ENCODE measurements at regions of chr11 and their contacts with region 1.

Region 1: DNA sequence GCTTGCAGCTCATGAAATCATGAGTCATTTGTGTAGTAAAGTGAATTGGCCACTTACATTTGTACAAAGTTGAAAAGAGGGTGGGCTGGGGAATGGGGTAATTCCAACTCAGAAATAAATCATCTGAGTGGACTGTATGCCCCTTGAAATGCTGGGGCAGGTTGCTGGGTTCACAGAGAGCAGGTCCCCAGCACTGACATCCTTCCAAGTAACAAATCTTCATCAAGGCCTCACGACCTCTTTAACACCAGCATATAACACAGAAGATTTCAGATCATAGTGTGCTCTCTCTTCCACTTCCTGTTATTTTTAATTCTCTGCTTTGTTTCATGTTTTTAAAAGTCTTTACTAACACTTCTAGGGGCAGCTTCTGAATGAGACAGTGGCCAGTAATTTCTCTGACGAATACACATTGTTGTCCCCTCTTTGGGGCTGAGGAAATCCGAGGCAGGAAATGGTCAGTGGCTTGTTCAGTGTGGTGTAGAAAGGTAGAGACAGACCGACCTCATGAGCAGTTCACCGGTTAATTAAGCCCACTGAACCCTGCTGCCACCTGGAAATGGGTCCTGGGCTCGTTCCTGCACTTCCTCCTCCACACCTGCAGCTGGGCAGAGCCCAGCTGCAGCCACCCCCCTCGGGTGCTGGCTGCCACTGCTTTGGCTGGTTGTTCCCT is 127.7 kb downstream of the MAML2 start:
- DNase-seq: peak in 9 of 10 donors; percentile 15 to 67 (median 36)
- ATAC-seq: peak; percentile 75 to 77
- H3K4me3 Mint-ChIP-seq: peak overlapping the region; percentile 64 to 87 (median 75)
- H3K27ac Mint-ChIP-seq: peak overlapping the region; percentile 91 to 99 (median 96)
- H3K4me1 Mint-ChIP-seq: peaks cover 52 to 98% (median 84%) of the 10 kb centered on the region in 4 donors
- H3K27me3 Mint-ChIP-seq: no peaks in the 10 kb centered on the region

Region 2: GRCh38 chr11:96235751-96236150 is 20.5 kb after region 1 on chr11:
- POLR2A ChIA-PET with region 1: interaction called, 11 read pairs
- DNase-seq: no peak
- ATAC-seq: peak; percentile 29 to 33
- H3K4me3 Mint-ChIP-seq: peak overlapping the region in 6 of 10 donors; percentile 2 to 39 (median 13)
- H3K27ac Mint-ChIP-seq: peak overlapping the region in 7 of 10 donors; percentile 34 to 85 (median 69)
- H3K4me1 Mint-ChIP-seq: peaks cover 19 to 53% (median 38%) of the 10 kb centered on the region in 4 donors
- H3K27me3 Mint-ChIP-seq: no peaks in the 10 kb centered on the region

Region 3: GRCh38 chr11:96242971-96243647 is 27.9 kb after region 1 on chr11:
- POLR2A ChIA-PET with region 1: interaction called, 16 read pairs
- DNase-seq: peak; percentile 54 to 81 (median 66)
- ATAC-seq: peak; percentile 73 to 85
- H3K4me3 Mint-ChIP-seq: peak overlapping the region; percentile 81 to 91 (median 84)
- H3K27ac Mint-ChIP-seq: peak overlapping the region; percentile 80 to 100 (median 93)
- H3K4me1 Mint-ChIP-seq: peaks cover 34 to 65% (median 62%) of the 10 kb centered on the region in 4 donors
- H3K27me3 Mint-ChIP-seq: no peaks in the 10 kb centered on the region

Region 4: DNA sequence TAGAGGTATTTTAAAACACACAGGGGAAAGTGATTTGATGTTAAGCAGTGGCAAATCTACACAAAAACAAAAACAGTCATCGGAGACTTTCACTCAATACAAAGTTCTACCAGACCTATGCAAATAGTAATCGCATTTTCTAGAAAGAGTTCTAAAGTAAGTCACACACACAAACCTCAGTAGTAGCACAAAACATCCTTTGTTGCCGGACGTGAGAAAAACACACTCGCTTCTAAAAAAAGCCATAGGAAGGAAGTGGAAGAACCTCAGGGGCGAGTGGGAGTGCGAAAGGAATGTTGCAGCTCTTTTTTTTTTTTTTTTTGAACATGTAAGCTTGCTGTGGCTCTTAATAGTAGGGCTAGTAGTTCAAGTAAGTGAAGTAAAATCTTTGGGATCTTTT is 38.8 kb after region 1 on chr11:
- POLR2A ChIA-PET with region 1: interaction called, 12 read pairs
- DNase-seq: peak in 5 of 10 donors; percentile 16 to 54 (median 35)
- ATAC-seq: peak in 1 of 2 donors; percentile 17
- H3K4me3 Mint-ChIP-seq: peak overlapping the region; percentile 34 to 85 (median 80)
- H3K27ac Mint-ChIP-seq: peak overlapping the region; percentile 83 to 100 (median 98)
- H3K4me1 Mint-ChIP-seq: peaks cover 51 to 95% (median 92%) of the 10 kb centered on the region in 4 donors
- H3K27me3 Mint-ChIP-seq: no peaks in the 10 kb centered on the region

Region 5: DNA sequence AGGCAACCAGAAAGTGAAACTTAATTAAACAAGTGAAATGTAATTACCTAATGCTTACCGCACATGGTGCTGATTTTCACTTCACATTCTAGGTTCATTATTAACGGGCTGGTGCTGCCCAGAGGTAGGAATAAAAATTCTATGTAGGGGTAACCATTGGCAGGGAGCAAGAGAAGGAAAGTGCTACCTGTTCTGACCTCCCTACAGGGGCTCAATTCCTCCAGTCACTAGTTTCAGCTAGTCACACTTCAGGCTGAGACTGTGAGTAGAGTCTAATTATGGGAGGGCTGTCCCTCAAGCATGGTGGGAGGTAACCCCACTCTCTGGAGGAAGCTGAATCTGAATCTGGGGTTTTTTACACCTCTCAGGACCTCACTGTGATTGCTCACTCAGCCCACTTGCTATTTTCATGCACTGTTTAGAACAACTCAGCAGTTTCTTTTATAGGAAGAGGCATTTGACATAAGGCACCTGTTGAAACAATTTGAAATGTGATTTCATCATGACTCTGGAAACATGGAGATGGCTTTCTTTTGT is 52.3 kb after region 1 on chr11:
- POLR2A ChIA-PET with region 1: no interaction called
- DNase-seq: peak in 5 of 10 donors; percentile 12 to 29 (median 23)
- ATAC-seq: peak; percentile 78 to 93
- H3K4me3 Mint-ChIP-seq: peak overlapping the region; percentile 59 to 86 (median 73)
- H3K27ac Mint-ChIP-seq: peak overlapping the region; percentile 63 to 94 (median 93)
- H3K4me1 Mint-ChIP-seq: peaks cover 42 to 94% (median 85%) of the 10 kb centered on the region in 4 donors
- H3K27me3 Mint-ChIP-seq: no peaks in the 10 kb centered on the region

Region 6: GRCh38 chr11:96306933-96307775 is 91.9 kb after region 1 on chr11:
- POLR2A ChIA-PET with region 1: no interaction called
- DNase-seq: peak in 6 of 10 donors; percentile 17 to 62 (median 24)
- ATAC-seq: peak; percentile 77 to 78
- H3K4me3 Mint-ChIP-seq: peak overlapping the region; percentile 62 to 87 (median 78)
- H3K27ac Mint-ChIP-seq: peak overlapping the region; percentile 56 to 96 (median 84)
- H3K4me1 Mint-ChIP-seq: peaks cover 33 to 87% (median 74%) of the 10 kb centered on the region in 4 donors
- H3K27me3 Mint-ChIP-seq: no peaks in the 10 kb centered on the region

Measured in naive thymus-derived CD8-positive, alpha-beta T cell (primary cell).